Heart right ventricle (tissue), 16 donors: ENCODE measurements at regions of chr6 and their contacts with region 1.

Region 1: GRCh38 chr6:37691904-37692806 is 5.5 kb downstream of the MDGA1 start:
- DNase-seq: peak; percentile 67 to 74
- ATAC-seq: peak; percentile 61 to 89 (median 82)
- H3K4me3 ChIP-seq: no peak overlapping the region
- H3K27ac ChIP-seq: no peak overlapping the region
- H3K4me1 ChIP-seq: peaks cover 13 to 25% (median 17%) of the 10 kb centered on the region in 9 donors
- H3K27me3 ChIP-seq: peaks cover 0 to 52% (median 39%) of the 10 kb centered on the region in 7 donors
- CTCF ChIP-seq: peak; percentile 95 to 97 (median 96)

Region 2: GRCh38 chr6:37324131-37325033 is 367.8 kb before region 1 on chr6:
- intact Hi-C with region 1: loop called in 8 of 10 experiments (anchors 2 to 10 kb)
- DNase-seq: no peak
- ATAC-seq: no peak
- H3K4me3 ChIP-seq: no peak overlapping the region
- H3K27ac ChIP-seq: peak overlapping the region in 1 of 10 donors; percentile 15
- H3K4me1 ChIP-seq: peaks cover 0 to 44% (median 12%) of the 10 kb centered on the region in 9 donors
- H3K27me3 ChIP-seq: no peaks in the 10 kb centered on the region
- CTCF ChIP-seq: no peak

Region 3: GRCh38 chr6:37339741-37340638 is 352.2 kb before region 1 on chr6:
- intact Hi-C with region 1: loop called in 1 of 10 experiments (anchors 10 kb)
- DNase-seq: no peak
- ATAC-seq: no peak
- H3K4me3 ChIP-seq: no peak overlapping the region
- H3K27ac ChIP-seq: no peak overlapping the region
- H3K4me1 ChIP-seq: peaks cover 0 to 2% (median 0%) of the 10 kb centered on the region in 9 donors
- H3K27me3 ChIP-seq: no peaks in the 10 kb centered on the region
- CTCF ChIP-seq: no peak

Region 4: GRCh38 chr6:37365762-37366161 is 326.4 kb before region 1 on chr6:
- intact Hi-C with region 1: loop called in 3 of 10 experiments (anchors 10 kb)
- DNase-seq: no peak
- ATAC-seq: peak in 6 of 8 donors; percentile 53 to 71 (median 68)
- H3K4me3 ChIP-seq: no peak overlapping the region
- H3K27ac ChIP-seq: peak overlapping the region in 1 of 10 donors; percentile 7
- H3K4me1 ChIP-seq: peaks cover 6 to 53% (median 31%) of the 10 kb centered on the region in 9 donors
- H3K27me3 ChIP-seq: no peaks in the 10 kb centered on the region
- CTCF ChIP-seq: peak in 8 of 9 donors; percentile 11 to 60 (median 40)

Region 5: DNA sequence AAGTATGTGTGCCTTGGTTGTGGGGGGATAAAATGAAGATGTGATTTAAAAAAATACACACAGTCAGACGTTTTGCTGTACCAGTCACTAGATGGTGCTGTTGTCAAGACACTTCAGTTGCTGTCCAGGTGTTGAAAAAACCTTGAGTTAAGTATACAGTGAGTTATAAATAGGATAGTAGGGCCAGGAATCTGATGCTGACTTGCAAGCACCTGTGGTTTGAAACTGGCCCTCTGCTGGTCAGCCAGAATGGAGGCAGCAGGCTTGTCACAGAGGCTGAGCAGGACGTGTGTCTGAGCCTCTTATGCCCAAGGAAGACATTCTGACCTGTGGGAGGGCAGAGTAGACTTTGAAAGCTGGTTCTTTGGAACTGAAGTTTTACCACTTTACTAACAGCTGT is 310.6 kb before region 1 on chr6:
- intact Hi-C with region 1: loop called in 4 of 10 experiments (anchors 5 to 10 kb)
- DNase-seq: no peak
- ATAC-seq: peak in 4 of 8 donors; percentile 56 to 71 (median 61)
- H3K4me3 ChIP-seq: no peak overlapping the region
- H3K27ac ChIP-seq: no peak overlapping the region
- H3K4me1 ChIP-seq: no peaks in the 10 kb centered on the region
- H3K27me3 ChIP-seq: no peaks in the 10 kb centered on the region
- CTCF ChIP-seq: peak; percentile 30 to 69 (median 54)

Region 6: DNA sequence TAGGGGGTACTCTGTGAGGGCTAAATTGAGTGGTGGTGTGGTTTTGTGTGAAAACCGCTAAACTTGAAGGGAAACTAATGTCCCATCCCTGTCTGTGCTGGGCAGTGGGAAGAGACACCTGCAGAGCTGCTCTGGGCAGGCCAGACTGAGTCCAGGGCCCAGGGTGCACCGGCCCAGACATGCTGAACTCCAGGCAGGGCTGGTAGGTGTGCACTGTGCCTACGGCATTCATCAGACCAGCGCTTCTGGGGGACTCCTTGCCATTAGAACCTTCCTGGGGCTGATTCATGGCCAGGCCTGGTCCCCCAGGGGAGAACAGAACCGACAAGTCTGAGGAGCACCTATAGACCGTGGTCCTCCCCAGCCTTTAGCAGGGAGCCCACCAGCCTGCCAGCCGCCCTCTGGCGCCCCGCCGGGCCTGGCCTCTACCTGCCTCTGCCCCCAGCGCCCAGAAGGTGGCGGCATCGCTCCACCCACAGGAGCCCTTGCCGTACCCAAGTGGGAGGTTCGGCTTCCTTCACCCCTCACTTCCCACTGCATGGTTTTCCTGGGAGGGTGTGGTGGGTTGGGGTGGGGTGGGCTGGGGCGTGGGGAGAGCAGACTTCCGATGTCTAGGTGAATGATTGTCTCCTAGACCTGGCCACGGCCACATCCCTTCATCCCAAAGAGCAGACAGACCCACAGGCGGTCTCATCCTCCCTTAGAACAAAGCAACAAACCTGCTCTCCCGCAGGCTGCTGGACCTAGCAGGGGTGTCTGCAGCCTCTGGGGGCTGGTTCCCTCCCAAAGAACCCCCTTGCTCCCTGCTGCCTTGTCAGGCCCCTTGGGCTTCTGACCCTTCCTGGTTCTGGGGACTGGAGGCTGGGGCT is 208.0 kb before region 1 on chr6:
- intact Hi-C with region 1: loop called (anchors 1 to 5 kb)
- DNase-seq: peak; percentile 48 to 70
- ATAC-seq: peak in 7 of 8 donors; percentile 59 to 75 (median 68)
- H3K4me3 ChIP-seq: no peak overlapping the region
- H3K27ac ChIP-seq: no peak overlapping the region
- H3K4me1 ChIP-seq: peaks cover 0 to 43% (median 27%) of the 10 kb centered on the region in 9 donors
- H3K27me3 ChIP-seq: no peaks in the 10 kb centered on the region
- CTCF ChIP-seq: peak; percentile 57 to 85 (median 79)

Region 7: GRCh38 chr6:37489660-37490361 is 202.3 kb before region 1 on chr6:
- intact Hi-C with region 1: loop called in 2 of 10 experiments (anchors 2 to 5 kb)
- DNase-seq: peak in 1 of 2 donors; percentile 39
- ATAC-seq: peak in 7 of 8 donors; percentile 37 to 63 (median 61)
- H3K4me3 ChIP-seq: no peak overlapping the region
- H3K27ac ChIP-seq: peak overlapping the region in 2 of 10 donors; percentile 18 to 55
- H3K4me1 ChIP-seq: peaks cover 3 to 44% (median 29%) of the 10 kb centered on the region in 9 donors
- H3K27me3 ChIP-seq: no peaks in the 10 kb centered on the region
- CTCF ChIP-seq: peak in 4 of 9 donors; percentile 22 to 34 (median 30)